CD8-positive, alpha-beta T cell (primary cell): ENCODE measurements at regions of chr6 and their contacts with region 1.

Region 1: DNA sequence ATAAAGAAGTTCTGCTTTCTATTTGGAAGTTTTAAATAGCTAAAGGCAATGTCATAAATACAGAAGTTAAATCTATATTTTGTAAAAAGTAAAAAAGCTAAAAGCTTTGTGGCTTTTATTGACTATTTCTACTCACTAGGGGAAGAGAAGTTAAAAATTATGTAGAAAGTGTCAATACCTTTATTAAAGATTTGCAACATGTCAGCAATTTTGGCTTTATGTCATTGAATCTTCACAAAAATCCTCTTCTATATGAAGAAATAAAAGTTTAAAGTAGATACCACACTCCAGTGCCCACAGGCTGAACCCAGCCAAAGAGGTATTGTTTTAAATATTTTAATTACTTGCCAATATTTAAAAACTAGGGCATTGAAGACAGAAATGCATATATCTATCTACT is 160.6 kb upstream of the HSF2 start:
- DNase-seq: no peak
- ATAC-seq: no peak
- H3K4me3 ChIP-seq: no peak overlapping the region
- H3K4me3 Mint-ChIP-seq: no peak overlapping the region
- H3K27ac ChIP-seq: no peak overlapping the region
- H3K27ac Mint-ChIP-seq: no peak overlapping the region
- H3K4me1 ChIP-seq: no peaks in the 10 kb centered on the region
- H3K4me1 Mint-ChIP-seq: no peaks in the 10 kb centered on the region
- H3K27me3 ChIP-seq: no peaks in the 10 kb centered on the region
- H3K27me3 Mint-ChIP-seq: no peaks in the 10 kb centered on the region
- CTCF ChIP-seq: no peak

Region 2: GRCh38 chr6:122268394-122268793 is 29.5 kb after region 1 on chr6:
- CTCF ChIA-PET with region 1: no interaction called
- POLR2A ChIA-PET with region 1: no interaction called
- intact Hi-C with region 1: loop called in 1 of 2 experiments (anchors 1 kb)
- DNase-seq: no peak
- ATAC-seq: no peak
- H3K4me3 ChIP-seq: no peak overlapping the region
- H3K4me3 Mint-ChIP-seq: no peak overlapping the region
- H3K27ac ChIP-seq: no peak overlapping the region
- H3K27ac Mint-ChIP-seq: no peak overlapping the region
- H3K4me1 ChIP-seq: no peaks in the 10 kb centered on the region
- H3K4me1 Mint-ChIP-seq: no peaks in the 10 kb centered on the region
- H3K27me3 ChIP-seq: no peaks in the 10 kb centered on the region
- H3K27me3 Mint-ChIP-seq: no peaks in the 10 kb centered on the region
- CTCF ChIP-seq: no peak